Caco-2 (cell line): ENCODE measurements at regions of chr2 and their contacts with region 1.

Region 1: DNA sequence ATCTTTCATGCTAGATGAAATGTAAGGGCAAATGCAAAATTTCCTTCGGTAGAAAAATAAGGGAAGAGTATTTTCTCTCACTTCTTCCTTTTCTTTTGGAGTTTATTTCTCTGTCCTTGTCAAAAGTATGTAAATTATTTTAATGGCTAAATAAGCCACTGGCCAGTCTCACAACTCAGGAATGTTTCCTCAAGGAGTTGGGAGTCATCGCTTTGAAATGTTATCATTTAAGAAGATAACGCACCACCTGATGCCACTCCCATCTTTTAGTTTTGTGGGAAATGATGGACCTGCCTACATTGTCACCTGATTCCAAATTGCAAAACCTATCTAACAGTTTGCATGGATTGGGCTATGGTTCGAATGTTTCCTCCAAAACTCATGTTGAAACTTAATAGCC is 32.5 kb upstream of the PPM1B start:
- DNase-seq: peak; percentile 67 to 74
- H3K4me3 ChIP-seq: no peak overlapping the region
- H3K4me3 Mint-ChIP-seq: peak overlapping the region; percentile 17
- H3K27ac Mint-ChIP-seq: peak overlapping the region; percentile 78
- H3K4me1 ChIP-seq: peaks cover 37% of the 10 kb centered on the region
- H3K4me1 Mint-ChIP-seq: peaks cover 22% of the 10 kb centered on the region
- H3K27me3 ChIP-seq: no peaks in the 10 kb centered on the region
- H3K27me3 Mint-ChIP-seq: no peaks in the 10 kb centered on the region
- CTCF ChIP-seq: no peak

Region 2: DNA sequence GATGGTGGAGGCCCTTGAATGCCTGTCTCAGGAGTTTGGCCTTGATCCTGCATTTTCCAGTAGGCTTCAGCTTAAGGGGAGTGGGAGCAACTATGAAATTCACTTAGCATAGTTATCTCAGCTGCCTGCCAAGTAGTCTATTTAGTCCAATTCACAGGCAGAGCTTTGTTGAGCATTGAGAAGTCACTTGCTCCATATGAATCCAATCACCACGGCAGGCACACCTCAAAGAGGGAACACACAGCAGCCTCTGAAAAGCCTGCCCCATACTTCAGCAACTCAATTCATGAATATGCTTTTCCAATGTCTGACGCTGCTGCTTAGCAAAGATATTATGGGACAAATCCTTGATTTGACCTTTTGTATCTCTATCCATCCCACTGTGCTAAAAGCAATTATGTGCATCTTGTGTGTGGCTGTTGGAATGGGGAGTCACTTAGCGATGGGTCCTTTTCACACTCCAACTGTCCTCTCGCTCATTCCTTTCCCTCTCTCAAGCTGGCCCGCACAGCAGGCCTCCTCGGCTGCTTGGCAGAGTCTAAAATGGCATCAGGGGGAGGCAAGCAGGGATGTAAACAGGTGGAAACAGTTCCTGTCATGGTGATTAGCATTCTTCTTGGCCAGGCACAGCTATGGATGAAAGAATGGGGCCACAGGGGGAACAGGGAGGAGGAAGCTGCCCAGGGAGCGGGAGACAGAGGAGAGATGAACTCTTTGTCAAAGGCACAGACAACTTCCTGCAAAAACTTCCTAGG is 84.4 kb before region 1 on chr2:
- CTCF ChIA-PET with region 1: no interaction called
- POLR2A ChIA-PET with region 1: no interaction called
- intact Hi-C with region 1: no loop called
- DNase-seq: no peak
- H3K4me3 ChIP-seq: no peak overlapping the region
- H3K4me3 Mint-ChIP-seq: no peak overlapping the region
- H3K27ac Mint-ChIP-seq: no peak overlapping the region
- H3K4me1 ChIP-seq: no peaks in the 10 kb centered on the region
- H3K4me1 Mint-ChIP-seq: no peaks in the 10 kb centered on the region
- H3K27me3 ChIP-seq: no peaks in the 10 kb centered on the region
- H3K27me3 Mint-ChIP-seq: no peaks in the 10 kb centered on the region
- CTCF ChIP-seq: no peak

Region 3: DNA sequence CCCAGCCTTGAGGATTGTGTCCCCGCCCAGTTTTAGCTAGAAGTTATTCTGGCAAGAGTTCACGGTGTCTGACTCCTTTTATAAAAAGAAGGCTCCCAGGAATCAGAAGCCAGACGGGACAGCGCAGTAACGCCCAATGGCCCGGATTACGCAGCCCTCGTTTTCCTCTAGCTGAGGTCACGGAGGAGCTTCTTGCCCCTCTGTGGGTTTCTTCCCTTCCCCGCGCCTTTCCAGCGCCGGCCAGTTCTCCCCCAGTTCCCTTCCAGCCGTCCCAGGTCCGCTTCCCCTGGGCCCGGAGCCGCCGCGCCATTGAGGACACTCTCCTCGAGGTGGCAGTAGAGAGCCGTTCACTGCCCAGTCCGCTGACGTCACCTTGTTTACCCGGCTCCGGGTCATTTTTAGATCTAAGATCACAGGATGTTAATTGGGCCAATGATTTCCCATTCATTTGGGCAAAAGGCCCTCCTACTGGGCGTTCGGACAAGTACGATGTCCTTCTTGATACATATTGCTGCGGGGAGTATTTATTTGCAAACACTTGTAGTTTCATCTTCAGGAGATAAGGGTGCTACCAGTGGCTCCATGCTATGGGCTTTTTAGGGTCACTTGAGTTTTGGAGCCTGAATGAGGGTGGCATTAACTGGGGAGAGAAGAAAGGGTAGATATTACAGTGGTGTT is 49.0 kb before region 1 on chr2:
- CTCF ChIA-PET with region 1: no interaction called
- POLR2A ChIA-PET with region 1: no interaction called
- intact Hi-C with region 1: loop called (anchors 2 kb)
- DNase-seq: peak; percentile 83 to 93
- H3K4me3 ChIP-seq: peak overlapping the region; percentile 32
- H3K4me3 Mint-ChIP-seq: peak overlapping the region; percentile 73
- H3K27ac Mint-ChIP-seq: peak overlapping the region; percentile 80
- H3K4me1 ChIP-seq: peaks cover 30% of the 10 kb centered on the region
- H3K4me1 Mint-ChIP-seq: peaks cover 49% of the 10 kb centered on the region
- H3K27me3 ChIP-seq: no peaks in the 10 kb centered on the region
- H3K27me3 Mint-ChIP-seq: no peaks in the 10 kb centered on the region
- CTCF ChIP-seq: peak; percentile 94 to 96

Region 4: GRCh38 chr2:44110444-44110843 is 25.7 kb before region 1 on chr2:
- CTCF ChIA-PET with region 1: no interaction called
- POLR2A ChIA-PET with region 1: no interaction called
- intact Hi-C with region 1: loop called (anchors 1 kb)
- DNase-seq: peak; percentile 63 to 68
- H3K4me3 ChIP-seq: no peak overlapping the region
- H3K4me3 Mint-ChIP-seq: peak overlapping the region; percentile 18
- H3K27ac Mint-ChIP-seq: peak overlapping the region; percentile 73
- H3K4me1 ChIP-seq: peaks cover 43% of the 10 kb centered on the region
- H3K4me1 Mint-ChIP-seq: peaks cover 19% of the 10 kb centered on the region
- H3K27me3 ChIP-seq: no peaks in the 10 kb centered on the region
- H3K27me3 Mint-ChIP-seq: no peaks in the 10 kb centered on the region
- CTCF ChIP-seq: no peak

Region 5: GRCh38 chr2:44155666-44156446 is 19.7 kb after region 1 on chr2:
- CTCF ChIA-PET with region 1: no interaction called
- POLR2A ChIA-PET with region 1: no interaction called
- intact Hi-C with region 1: no loop called
- DNase-seq: no peak
- H3K4me3 ChIP-seq: no peak overlapping the region
- H3K4me3 Mint-ChIP-seq: no peak overlapping the region
- H3K27ac Mint-ChIP-seq: no peak overlapping the region
- H3K4me1 ChIP-seq: no peaks in the 10 kb centered on the region
- H3K4me1 Mint-ChIP-seq: no peaks in the 10 kb centered on the region
- H3K27me3 ChIP-seq: no peaks in the 10 kb centered on the region
- H3K27me3 Mint-ChIP-seq: no peaks in the 10 kb centered on the region
- CTCF ChIP-seq: no peak

Region 6: GRCh38 chr2:44267796-44268648 is 131.8 kb after region 1 on chr2:
- CTCF ChIA-PET with region 1: no interaction called
- POLR2A ChIA-PET with region 1: no interaction called
- intact Hi-C with region 1: no loop called
- DNase-seq: no peak
- H3K4me3 ChIP-seq: no peak overlapping the region
- H3K4me3 Mint-ChIP-seq: no peak overlapping the region
- H3K27ac Mint-ChIP-seq: no peak overlapping the region
- H3K4me1 ChIP-seq: peaks cover 18% of the 10 kb centered on the region
- H3K4me1 Mint-ChIP-seq: peaks cover 14% of the 10 kb centered on the region
- H3K27me3 ChIP-seq: no peaks in the 10 kb centered on the region
- H3K27me3 Mint-ChIP-seq: no peaks in the 10 kb centered on the region
- CTCF ChIP-seq: no peak